PC-3 (cell line): ENCODE measurements at regions of chr1 and their contacts with region 1.

Region 1: GRCh38 chr1:153805042-153805745 is 30.0 kb downstream of the SLC27A3 start:
- DNase-seq: peak; percentile 91
- ATAC-seq: peak; percentile 88
- H3K4me3 ChIP-seq: no peak overlapping the region
- H3K27ac ChIP-seq: peak overlapping the region; percentile 29
- H3K4me1 ChIP-seq: peaks cover 11% of the 10 kb centered on the region
- H3K27me3 ChIP-seq: no peaks in the 10 kb centered on the region
- CTCF ChIP-seq: no peak

Region 2: GRCh38 chr1:153903841-153904455 is 98.8 kb after region 1 on chr1:
- CTCF ChIA-PET with region 1: no interaction called
- POLR2A ChIA-PET with region 1: interaction called, 12 read pairs
- intact Hi-C with region 1: no loop called
- DNase-seq: no peak
- ATAC-seq: no peak
- H3K4me3 ChIP-seq: no peak overlapping the region
- H3K27ac ChIP-seq: no peak overlapping the region
- H3K4me1 ChIP-seq: no peaks in the 10 kb centered on the region
- H3K27me3 ChIP-seq: no peaks in the 10 kb centered on the region
- CTCF ChIP-seq: no peak